Body of pancreas (tissue), 4 donors: ENCODE measurements at regions of chr18 and their contacts with region 1.

Region 1: DNA sequence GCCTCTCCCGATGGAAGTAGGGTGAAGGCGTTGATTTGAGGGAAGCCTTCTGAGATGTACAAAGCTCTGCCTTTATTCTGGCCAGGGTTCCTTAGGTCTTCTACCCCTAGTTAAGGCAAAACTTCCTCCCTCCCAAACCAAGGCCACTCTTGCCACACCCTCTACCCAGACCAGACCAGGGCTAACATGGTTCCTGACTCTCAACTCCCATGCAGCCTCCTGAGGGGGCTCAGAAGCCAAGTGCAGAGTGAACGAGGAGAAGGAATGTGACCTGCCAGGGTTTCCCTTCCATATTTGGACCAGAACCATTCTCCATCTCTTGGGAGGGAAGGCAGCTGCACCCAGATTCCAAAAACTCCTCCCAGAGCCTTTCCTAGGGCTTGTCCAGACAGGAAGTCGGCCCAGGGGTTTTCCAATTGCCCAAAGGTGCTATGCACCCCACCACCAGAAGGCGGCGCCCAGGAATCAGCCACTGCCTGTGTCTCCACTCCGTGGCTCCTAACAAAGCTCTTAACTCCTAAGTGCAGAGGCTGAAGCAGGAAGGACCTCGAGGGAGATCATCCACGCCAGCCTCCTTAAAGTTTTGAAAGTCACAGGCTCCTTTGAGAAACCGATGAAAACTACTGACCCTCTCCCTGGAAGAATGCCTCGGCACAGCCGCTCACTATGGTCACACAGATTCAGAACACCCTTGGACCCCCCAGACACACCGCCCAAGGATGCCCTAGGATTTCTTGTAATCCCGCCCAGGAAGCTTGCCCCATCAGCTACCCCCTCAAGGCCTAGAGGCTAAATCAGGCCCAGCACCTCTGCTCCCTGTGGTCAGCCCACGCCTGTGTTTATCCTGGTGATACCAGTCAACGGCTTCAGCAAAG is 157.8 kb downstream of the SMAD2 start:
- DNase-seq: peak; percentile 63 to 74 (median 68)
- ATAC-seq: peak; percentile 68
- H3K4me3 ChIP-seq: no peak overlapping the region
- H3K27ac ChIP-seq: no peak overlapping the region
- H3K4me1 ChIP-seq: no peaks in the 10 kb centered on the region
- H3K27me3 ChIP-seq: no peaks in the 10 kb centered on the region
- CTCF ChIP-seq: peak; percentile 63 to 81 (median 73)
- POLR2A ChIP-seq: no peak

Region 2: GRCh38 chr18:47964053-47964452 is 191.4 kb after region 1 on chr18:
- intact Hi-C with region 1: no loop called
- DNase-seq: no peak
- ATAC-seq: no peak
- H3K4me3 ChIP-seq: no peak overlapping the region
- H3K27ac ChIP-seq: no peak overlapping the region
- H3K4me1 ChIP-seq: peaks cover 5% of the 10 kb centered on the region
- H3K27me3 ChIP-seq: no peaks in the 10 kb centered on the region
- CTCF ChIP-seq: no peak
- POLR2A ChIP-seq: no peak

Region 3: GRCh38 chr18:48445540-48445939 is 672.9 kb after region 1 on chr18:
- intact Hi-C with region 1: loop called (anchors 10 kb)
- DNase-seq: peak; percentile 71 to 83 (median 80)
- ATAC-seq: peak; percentile 68
- H3K4me3 ChIP-seq: no peak overlapping the region
- H3K27ac ChIP-seq: no peak overlapping the region
- H3K4me1 ChIP-seq: peaks cover 6% of the 10 kb centered on the region
- H3K27me3 ChIP-seq: no peaks in the 10 kb centered on the region
- CTCF ChIP-seq: peak; percentile 58 to 81 (median 70)
- POLR2A ChIP-seq: no peak